Prostate gland (tissue), 2 donors: ENCODE measurements at regions of chr2 and their contacts with region 1.

Region 1: DNA sequence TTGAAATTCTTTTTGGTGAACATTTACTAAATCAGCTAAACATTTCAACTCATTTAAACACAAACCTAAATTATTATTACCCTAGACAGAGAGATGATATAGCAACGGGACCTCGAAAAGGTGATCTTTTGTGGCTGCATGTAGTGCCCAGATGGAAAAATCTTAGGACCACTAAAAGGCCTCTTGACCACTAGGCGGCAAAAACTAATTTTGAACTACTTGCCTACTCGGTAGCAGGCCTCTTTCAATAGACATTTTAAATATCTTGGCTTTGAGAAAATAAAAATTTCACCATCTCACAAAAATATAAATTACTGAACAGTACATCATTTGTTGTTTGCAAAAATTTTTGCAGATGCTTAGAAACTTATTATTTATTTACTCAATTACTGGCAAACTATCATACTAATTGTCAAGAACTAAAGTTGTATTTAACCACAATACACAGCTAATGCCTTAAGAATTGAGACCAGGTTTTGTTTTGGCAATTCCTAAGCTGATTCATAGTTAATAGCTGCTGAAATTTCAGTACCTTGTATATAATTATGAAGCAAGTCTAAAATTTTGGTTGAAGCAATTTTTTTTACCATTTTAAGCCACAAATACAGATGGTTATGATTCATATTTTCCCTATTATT is 9.4 kb downstream of the COL3A1 start:
- DNase-seq: no peak
- H3K4me3 ChIP-seq: no peak overlapping the region
- H3K27ac ChIP-seq: peak overlapping the region in 1 of 2 donors; percentile 31
- H3K4me1 ChIP-seq: no peaks in the 10 kb centered on the region
- H3K27me3 ChIP-seq: no peaks in the 10 kb centered on the region
- CTCF ChIP-seq: peak in 1 of 4 experiments; percentile 12
- POLR2A ChIP-seq: no peak

Region 2: GRCh38 chr2:188524519-188525113 is 458.9 kb before region 1 on chr2:
- intact Hi-C with region 1: loop called (anchors 2 kb)
- DNase-seq: peak; percentile 11
- H3K4me3 ChIP-seq: no peak overlapping the region
- H3K27ac ChIP-seq: no peak overlapping the region
- H3K4me1 ChIP-seq: no peaks in the 10 kb centered on the region
- H3K27me3 ChIP-seq: no peaks in the 10 kb centered on the region
- CTCF ChIP-seq: peak; percentile 56 to 74 (median 71)
- POLR2A ChIP-seq: no peak

Region 3: DNA sequence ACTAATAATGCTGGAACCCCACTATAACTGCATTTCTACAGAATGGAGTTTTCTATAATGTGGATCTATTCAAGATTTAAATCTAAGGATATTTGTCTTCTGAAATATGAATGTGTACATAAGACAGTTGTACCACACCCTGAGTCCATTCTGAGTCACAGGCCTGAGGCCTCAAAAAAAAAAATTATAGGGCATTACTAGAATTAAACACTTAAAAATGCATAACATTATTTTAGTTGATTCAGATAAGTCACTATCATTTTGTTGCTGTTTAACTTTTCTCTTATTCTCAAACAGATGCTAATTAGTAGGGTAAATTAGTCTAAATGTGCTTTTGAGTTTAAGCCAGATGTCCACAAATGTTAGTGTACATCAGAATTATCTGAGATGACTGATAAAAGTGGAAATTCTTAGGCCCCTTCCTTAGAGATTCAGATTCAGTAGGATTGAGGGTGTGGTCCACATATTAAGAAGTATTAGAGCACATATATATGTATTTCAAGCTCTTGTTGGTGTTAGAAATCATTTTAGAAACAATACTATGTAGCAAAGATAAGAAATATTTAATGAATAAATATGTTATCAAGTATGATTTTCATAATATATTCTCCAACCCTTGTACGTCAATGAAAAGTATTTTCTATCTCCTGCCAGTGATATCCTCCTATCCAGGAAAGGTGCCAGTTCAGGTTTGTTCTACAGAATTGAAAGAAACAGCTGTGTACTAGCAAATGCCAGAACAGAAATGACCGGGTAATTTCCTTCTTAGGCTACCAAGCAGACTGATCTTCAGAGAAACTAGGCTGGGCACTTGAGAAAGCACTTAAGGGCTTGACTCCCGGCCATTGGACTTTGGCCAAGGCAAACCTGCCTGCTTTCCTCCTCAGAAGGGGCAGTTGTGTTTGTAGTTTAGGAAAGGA is 238.6 kb after region 1 on chr2:
- intact Hi-C with region 1: no loop called
- DNase-seq: no peak
- H3K4me3 ChIP-seq: no peak overlapping the region
- H3K27ac ChIP-seq: no peak overlapping the region
- H3K4me1 ChIP-seq: no peaks in the 10 kb centered on the region
- H3K27me3 ChIP-seq: no peaks in the 10 kb centered on the region
- CTCF ChIP-seq: no peak
- POLR2A ChIP-seq: no peak

Region 4: DNA sequence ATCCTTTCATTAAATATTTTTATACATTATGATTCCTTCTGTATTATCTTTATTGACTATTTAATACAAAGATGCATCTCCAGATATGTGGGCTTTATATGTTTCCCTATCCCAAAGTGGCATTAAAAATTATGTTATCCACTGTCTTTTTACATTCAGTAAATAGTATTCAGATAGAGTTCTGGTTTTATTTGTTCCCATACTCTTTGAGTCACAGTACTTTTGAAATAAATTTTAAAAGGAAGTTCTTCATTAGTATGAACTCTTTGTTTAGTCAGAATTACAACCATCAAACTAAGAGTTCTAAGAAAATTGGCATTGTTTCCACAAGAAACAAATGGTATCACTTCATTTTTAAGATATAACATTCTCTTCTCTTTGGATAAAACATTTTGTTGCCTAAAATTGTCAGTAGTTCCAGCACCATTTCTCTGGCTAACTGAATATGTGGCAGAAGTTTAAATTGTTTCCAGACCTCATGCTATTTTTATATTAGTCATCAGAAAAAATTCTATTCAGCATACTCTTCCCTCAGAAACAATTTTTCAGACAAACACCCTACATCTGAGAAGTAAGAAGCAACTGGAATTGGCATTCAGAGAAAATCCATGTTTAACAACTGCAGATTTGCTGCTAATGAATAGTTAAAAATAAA is 284.5 kb after region 1 on chr2:
- intact Hi-C with region 1: no loop called
- DNase-seq: no peak
- H3K4me3 ChIP-seq: no peak overlapping the region
- H3K27ac ChIP-seq: no peak overlapping the region
- H3K4me1 ChIP-seq: no peaks in the 10 kb centered on the region
- H3K27me3 ChIP-seq: no peaks in the 10 kb centered on the region
- CTCF ChIP-seq: no peak
- POLR2A ChIP-seq: no peak

Region 5: DNA sequence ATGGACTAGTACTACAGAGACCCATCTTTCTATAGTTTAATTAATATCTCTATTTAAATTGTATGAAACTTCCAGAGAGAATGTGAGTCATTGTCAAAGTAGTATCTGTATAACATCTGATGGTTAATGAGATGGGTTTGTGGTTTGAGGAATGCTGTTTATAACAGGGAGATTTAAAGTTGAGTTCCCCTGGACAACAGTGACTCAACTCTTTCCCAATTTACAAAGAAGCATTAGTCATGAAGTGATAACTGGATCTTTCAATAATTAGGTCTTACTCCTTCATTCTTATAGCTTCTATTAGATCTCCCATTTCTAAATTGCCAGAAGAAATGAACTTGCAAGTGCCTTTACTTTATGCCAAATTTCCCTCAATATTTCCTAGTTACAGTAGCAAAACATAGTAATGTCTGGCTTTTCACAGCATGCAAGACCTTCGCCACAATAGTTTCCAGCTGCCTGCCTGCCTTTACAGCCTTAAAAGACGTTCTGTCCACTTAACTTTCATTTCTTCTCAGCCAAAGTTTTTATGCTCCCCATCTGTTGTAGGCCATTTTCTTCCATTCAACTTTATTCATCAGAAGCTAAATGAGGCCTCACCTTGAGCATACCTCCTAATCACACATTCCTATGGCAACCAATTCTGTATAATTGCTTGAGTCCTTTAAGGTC is 410.0 kb after region 1 on chr2:
- intact Hi-C with region 1: no loop called
- DNase-seq: no peak
- H3K4me3 ChIP-seq: no peak overlapping the region
- H3K27ac ChIP-seq: no peak overlapping the region
- H3K4me1 ChIP-seq: no peaks in the 10 kb centered on the region
- H3K27me3 ChIP-seq: no peaks in the 10 kb centered on the region
- CTCF ChIP-seq: no peak
- POLR2A ChIP-seq: no peak